Esophagus muscularis mucosa (tissue), 4 donors: ENCODE measurements at regions of chr11 and their contacts with region 1.

Region 1: DNA sequence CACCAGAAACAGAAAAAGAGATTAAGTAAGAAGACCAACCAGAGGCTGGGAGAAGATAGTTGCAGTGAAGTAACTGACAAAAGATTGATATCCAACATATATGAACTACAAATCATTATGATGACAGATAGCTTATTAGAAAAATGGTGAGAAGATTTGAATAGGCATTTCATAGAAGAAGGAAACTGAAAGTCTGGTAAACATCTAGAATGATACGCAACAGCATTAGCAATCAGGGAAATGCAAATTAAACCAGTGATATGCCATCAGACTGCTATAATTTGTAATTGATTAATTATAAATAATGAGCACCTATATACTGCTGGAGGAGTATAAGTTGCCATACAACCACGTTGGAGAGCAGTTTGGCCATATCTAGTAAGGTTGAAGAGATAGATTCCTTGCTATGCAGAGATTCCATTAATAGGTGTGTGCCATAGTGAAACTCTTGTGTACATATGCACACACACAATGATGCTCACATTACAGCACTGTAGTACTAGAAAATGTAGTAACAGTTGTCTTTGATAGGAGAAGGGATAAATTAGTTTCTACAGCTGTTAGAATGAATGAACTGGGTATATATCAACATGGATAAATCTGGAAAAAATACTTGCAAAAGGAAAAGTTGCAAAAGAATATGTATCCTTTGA is 20.5 kb downstream of the RNF169 start:
- DNase-seq: no peak
- H3K4me3 ChIP-seq: no peak overlapping the region
- H3K27ac ChIP-seq: no peak overlapping the region
- H3K4me1 ChIP-seq: peaks cover 0 to 22% (median 18%) of the 10 kb centered on the region in 4 donors
- H3K27me3 ChIP-seq: no peaks in the 10 kb centered on the region
- CTCF ChIP-seq: no peak
- EP300 ChIP-seq: no peak
- POLR2A ChIP-seq: no peak

Region 2: GRCh38 chr11:74819400-74819799 is 50.2 kb after region 1 on chr11:
- intact Hi-C with region 1: loop called (anchors 10 kb)
- DNase-seq: no peak
- H3K4me3 ChIP-seq: no peak overlapping the region
- H3K27ac ChIP-seq: peak overlapping the region; percentile 6 to 48 (median 26)
- H3K4me1 ChIP-seq: peaks cover 22 to 51% (median 47%) of the 10 kb centered on the region in 4 donors
- H3K27me3 ChIP-seq: no peaks in the 10 kb centered on the region
- CTCF ChIP-seq: no peak
- EP300 ChIP-seq: no peak
- POLR2A ChIP-seq: no peak